ENCODE measurements at regions of chr7 and their contacts with region 1.

Region 1: GRCh38 chr7:30564243-30564892 is 30.3 kb upstream of the GARS1 start:
- DNase-seq: peak; percentile 90
- H3K4me3 ChIP-seq: no peak overlapping the region
- H3K27ac ChIP-seq: no peak overlapping the region
- H3K4me1 ChIP-seq: no peaks in the 10 kb centered on the region
- H3K27me3 ChIP-seq: no peaks in the 10 kb centered on the region
- CTCF ChIP-seq: peak; percentile 84

Region 2: DNA sequence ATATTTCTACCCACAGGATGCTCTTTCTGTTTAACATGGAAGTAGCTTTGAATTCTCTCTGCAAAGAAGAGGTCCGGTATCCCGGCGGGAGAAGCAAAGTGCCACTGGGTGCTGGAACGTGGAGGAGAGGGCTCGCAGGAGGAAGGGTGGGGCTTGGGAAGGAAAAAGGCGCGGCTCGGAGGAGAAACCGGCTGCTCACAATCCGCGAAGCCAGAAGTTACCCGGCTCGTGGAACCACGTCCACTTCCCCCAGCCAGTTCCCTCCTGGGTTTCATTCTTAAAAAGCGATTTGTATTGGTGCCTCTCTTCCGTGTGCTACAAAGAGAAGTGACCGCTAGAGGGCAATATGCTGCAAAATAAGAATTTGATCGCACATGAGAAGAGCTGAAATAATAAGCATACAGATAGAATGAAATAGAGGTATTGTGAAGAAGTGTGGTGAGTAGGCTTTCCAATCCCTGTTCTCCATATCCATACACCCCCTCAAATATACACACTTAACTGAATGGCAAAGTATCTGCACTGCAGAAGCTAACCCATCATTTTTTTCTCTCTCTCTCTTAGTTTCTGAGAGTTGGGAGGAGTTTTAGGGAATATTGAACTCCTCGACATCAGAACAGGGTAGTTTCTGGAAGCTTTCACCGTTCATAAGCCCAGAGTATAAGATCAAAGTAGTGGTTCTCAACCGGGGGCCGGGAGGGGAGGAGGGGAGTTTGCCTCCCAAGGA is 1637.3 kb before region 1 on chr7:
- CTCF ChIA-PET with region 1: interaction called, 4 read pairs
- POLR2A ChIA-PET with region 1: no interaction called
- intact Hi-C with region 1: loop called (anchors 10 kb)
- DNase-seq: peak; percentile 96
- H3K4me3 ChIP-seq: peak overlapping the region; percentile 54
- H3K27ac ChIP-seq: peak overlapping the region; percentile 64
- H3K4me1 ChIP-seq: peaks cover 34% of the 10 kb centered on the region
- H3K27me3 ChIP-seq: no peaks in the 10 kb centered on the region
- CTCF ChIP-seq: peak; percentile 88

Region 3: GRCh38 chr7:30164567-30164966 is 399.8 kb before region 1 on chr7:
- CTCF ChIA-PET with region 1: no interaction called
- POLR2A ChIA-PET with region 1: no interaction called
- intact Hi-C with region 1: loop called (anchors 5 kb)
- DNase-seq: peak; percentile 61
- H3K4me3 ChIP-seq: no peak overlapping the region
- H3K27ac ChIP-seq: no peak overlapping the region
- H3K4me1 ChIP-seq: no peaks in the 10 kb centered on the region
- H3K27me3 ChIP-seq: no peaks in the 10 kb centered on the region
- CTCF ChIP-seq: peak; percentile 60

Region 4: DNA sequence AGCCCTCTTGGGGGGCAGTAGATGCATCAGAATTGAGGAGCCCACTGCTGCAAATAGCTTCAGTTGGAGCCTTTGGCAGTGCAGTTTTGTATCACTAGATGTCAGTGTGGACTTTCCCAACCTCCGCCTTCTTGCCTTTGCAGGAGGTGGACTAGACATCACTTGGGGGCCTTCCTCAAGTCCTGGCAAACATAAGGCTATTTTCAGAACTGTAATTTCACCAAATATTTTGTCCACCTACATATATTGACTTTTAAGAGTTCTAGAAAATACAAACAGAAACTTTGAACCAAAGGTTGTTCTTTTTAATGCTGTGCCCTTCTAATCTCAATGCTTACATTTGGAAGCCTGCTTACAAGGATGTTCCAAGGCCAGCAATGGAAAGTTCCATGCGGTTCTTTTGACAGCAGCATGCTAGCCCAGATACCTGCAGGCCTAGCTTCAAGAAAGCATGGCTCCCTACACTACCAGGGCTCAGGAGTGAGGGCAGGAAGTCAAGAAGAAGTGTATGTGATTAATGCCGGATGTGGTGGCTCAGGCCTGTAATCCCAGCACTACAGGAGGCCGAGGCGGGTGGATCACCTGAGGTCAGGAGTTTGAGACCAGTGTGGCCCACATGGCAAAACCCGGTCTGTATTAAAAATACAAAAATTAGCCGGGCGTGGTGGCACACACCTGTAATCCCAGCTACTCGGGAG is 288.0 kb before region 1 on chr7:
- CTCF ChIA-PET with region 1: interaction called, 26 read pairs
- POLR2A ChIA-PET with region 1: no interaction called
- intact Hi-C with region 1: loop called (anchors 1 kb)
- DNase-seq: peak; percentile 71
- H3K4me3 ChIP-seq: no peak overlapping the region
- H3K27ac ChIP-seq: no peak overlapping the region
- H3K4me1 ChIP-seq: no peaks in the 10 kb centered on the region
- H3K27me3 ChIP-seq: no peaks in the 10 kb centered on the region
- CTCF ChIP-seq: peak; percentile 79

Region 5: GRCh38 chr7:30548762-30549344 is 15.5 kb before region 1 on chr7:
- CTCF ChIA-PET with region 1: interaction called, 5 read pairs
- POLR2A ChIA-PET with region 1: no interaction called
- intact Hi-C with region 1: loop called (anchors 2 kb)
- DNase-seq: peak; percentile 85
- H3K4me3 ChIP-seq: no peak overlapping the region
- H3K27ac ChIP-seq: no peak overlapping the region
- H3K4me1 ChIP-seq: peaks cover 26% of the 10 kb centered on the region
- H3K27me3 ChIP-seq: no peaks in the 10 kb centered on the region
- CTCF ChIP-seq: peak; percentile 82